Common myeloid progenitor, CD34-positive (primary cell): ENCODE measurements at regions of chr3 and their contacts with region 1.

Region 1: DNA sequence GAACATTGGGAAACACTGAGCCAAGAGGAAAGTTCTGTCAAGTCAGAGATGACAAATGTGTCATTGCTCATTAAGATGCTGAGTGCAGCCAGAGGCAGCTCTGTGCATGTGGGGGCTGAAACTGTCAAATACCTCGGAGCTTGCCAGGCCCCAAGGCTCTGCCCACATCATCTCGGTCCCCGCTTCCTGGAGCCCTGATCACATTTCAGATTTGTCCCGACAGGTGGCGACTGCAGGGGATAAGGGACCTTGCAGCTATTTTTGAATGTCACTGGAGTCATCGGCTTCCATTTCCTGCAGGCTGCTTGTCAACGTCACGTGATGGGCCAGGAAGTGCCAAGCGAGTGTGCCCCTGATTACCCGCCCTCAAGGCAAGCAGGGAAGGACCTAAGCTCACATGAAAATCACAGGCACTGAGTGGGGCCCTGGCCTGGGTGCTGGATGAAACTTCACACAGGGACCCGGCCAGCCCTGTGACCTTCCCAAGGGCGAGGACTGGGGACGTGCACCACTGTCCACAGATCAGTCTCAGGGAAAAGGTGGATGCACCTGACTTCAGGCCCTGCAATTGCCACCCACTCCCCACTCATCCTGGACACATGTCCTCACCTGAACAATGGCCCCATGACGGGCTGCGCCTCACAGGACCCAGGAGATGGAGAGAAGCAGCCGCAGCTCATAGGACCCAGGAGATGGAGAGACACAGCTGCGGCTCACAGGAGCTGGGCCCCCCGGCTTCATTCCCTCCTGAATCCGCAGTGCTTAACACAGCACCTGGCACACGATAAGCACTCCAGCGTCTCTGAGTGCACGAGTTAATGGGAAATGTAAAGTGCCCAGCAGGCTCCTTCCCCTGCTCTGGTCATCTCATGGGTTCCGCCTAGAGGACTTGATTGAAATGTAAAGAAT is 73.4 kb downstream of the NUP210 start:
- DNase-seq: peak; percentile 82 to 89 (median 84)
- H3K4me3 ChIP-seq: no peak overlapping the region
- H3K27ac ChIP-seq: peak overlapping the region in 1 of 2 experiments; percentile 14
- H3K4me1 ChIP-seq: peaks cover 6 to 46% (median 39%) of the 10 kb centered on the region in 4 experiments
- H3K27me3 ChIP-seq: no peaks in the 10 kb centered on the region

Region 2: GRCh38 chr3:13025094-13025493 is 321.6 kb before region 1 on chr3:
- CTCF ChIA-PET with region 1: no interaction called
- POLR2A ChIA-PET with region 1: no interaction called
- DNase-seq: no peak
- H3K4me3 ChIP-seq: no peak overlapping the region
- H3K27ac ChIP-seq: no peak overlapping the region
- H3K4me1 ChIP-seq: peaks cover 0 to 13% (median 4%) of the 10 kb centered on the region in 4 experiments
- H3K27me3 ChIP-seq: no peaks in the 10 kb centered on the region

Region 3: DNA sequence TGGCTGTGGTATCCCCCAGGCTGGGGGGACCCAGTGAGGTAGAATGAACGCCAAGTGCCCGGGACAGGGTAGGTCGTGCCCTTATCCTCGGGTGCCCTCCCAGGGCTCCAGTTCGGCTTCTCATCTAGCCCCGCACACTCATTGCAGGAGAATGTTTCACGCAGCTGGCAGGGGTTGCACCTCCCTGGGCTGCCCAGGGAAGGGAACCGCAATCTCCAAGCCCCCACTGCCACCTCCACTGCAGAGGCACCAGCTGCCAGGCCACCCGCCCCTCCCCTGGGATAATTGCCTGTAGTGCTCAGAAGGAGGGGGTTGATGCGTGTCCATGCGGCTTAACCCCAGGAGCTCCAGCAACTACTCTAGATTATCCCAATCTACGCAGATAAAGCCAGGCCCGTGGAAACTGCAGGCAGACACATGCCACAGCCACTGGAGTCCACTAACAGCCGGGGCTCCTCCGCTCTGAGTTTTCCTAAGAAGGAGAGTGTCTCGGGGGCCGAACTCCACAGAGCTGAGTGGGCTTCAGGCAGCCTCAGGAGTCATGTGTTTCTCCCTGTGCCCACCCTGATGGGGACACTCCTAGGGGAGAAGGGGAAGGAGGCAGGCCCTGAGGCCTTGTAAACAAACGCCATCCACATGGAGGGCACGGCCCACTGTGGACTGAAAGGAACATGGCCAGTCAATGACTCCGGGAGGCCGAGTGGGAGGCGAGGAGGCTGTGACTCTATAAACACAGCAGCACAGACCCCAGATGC is 136.3 kb before region 1 on chr3:
- CTCF ChIA-PET with region 1: no interaction called
- POLR2A ChIA-PET with region 1: no interaction called
- DNase-seq: no peak
- H3K4me3 ChIP-seq: no peak overlapping the region
- H3K27ac ChIP-seq: no peak overlapping the region
- H3K4me1 ChIP-seq: peaks cover 0 to 3% (median 0%) of the 10 kb centered on the region in 4 experiments
- H3K27me3 ChIP-seq: peaks cover 0 to 22% (median 0%) of the 10 kb centered on the region in 5 experiments

Region 4: GRCh38 chr3:13324835-13325501 is 21.8 kb before region 1 on chr3:
- CTCF ChIA-PET with region 1: interaction called, 14 read pairs
- POLR2A ChIA-PET with region 1: no interaction called
- DNase-seq: no peak
- H3K4me3 ChIP-seq: no peak overlapping the region
- H3K27ac ChIP-seq: no peak overlapping the region
- H3K4me1 ChIP-seq: no peaks in the 10 kb centered on the region
- H3K27me3 ChIP-seq: no peaks in the 10 kb centered on the region

Region 5: GRCh38 chr3:13333236-13333897 is 13.4 kb before region 1 on chr3:
- CTCF ChIA-PET with region 1: interaction called, 10 read pairs
- POLR2A ChIA-PET with region 1: no interaction called
- DNase-seq: no peak
- H3K4me3 ChIP-seq: no peak overlapping the region
- H3K27ac ChIP-seq: no peak overlapping the region
- H3K4me1 ChIP-seq: no peaks in the 10 kb centered on the region
- H3K27me3 ChIP-seq: no peaks in the 10 kb centered on the region

Region 6: GRCh38 chr3:13528217-13528867 is 181.6 kb after region 1 on chr3:
- CTCF ChIA-PET with region 1: no interaction called
- POLR2A ChIA-PET with region 1: no interaction called
- DNase-seq: peak in 2 of 3 donors; percentile 46 to 47
- H3K4me3 ChIP-seq: no peak overlapping the region
- H3K27ac ChIP-seq: no peak overlapping the region
- H3K4me1 ChIP-seq: no peaks in the 10 kb centered on the region
- H3K27me3 ChIP-seq: no peaks in the 10 kb centered on the region

Region 7: DNA sequence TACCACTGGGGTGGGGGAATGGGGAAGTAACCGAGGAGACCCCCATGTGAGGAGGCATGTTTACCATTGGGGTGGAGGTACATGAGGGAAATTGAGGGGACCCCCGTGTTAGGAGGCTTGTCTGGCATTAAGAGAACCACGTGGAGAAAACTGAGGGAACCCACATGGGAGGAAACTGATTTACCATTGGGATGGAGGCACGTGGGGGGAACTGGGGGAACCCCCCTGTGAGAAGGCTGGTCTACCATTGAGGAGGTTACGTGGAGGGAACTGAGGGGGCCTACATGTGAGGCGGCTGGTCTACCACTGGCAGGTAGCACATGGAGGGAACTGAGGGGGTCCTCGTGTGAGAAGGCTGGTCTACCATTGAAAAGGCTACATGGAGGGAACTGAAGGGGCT is 361.6 kb after region 1 on chr3:
- CTCF ChIA-PET with region 1: no interaction called
- POLR2A ChIA-PET with region 1: no interaction called
- DNase-seq: no peak
- H3K4me3 ChIP-seq: no peak overlapping the region
- H3K27ac ChIP-seq: no peak overlapping the region
- H3K4me1 ChIP-seq: no peaks in the 10 kb centered on the region
- H3K27me3 ChIP-seq: no peaks in the 10 kb centered on the region